Activated naive CD4-positive, alpha-beta T cell treated with anti-CD3 and anti-CD28 coated beads for 36 hours (primary cell): ENCODE measurements at regions of chr2 and their contacts with region 1.

Region 1: DNA sequence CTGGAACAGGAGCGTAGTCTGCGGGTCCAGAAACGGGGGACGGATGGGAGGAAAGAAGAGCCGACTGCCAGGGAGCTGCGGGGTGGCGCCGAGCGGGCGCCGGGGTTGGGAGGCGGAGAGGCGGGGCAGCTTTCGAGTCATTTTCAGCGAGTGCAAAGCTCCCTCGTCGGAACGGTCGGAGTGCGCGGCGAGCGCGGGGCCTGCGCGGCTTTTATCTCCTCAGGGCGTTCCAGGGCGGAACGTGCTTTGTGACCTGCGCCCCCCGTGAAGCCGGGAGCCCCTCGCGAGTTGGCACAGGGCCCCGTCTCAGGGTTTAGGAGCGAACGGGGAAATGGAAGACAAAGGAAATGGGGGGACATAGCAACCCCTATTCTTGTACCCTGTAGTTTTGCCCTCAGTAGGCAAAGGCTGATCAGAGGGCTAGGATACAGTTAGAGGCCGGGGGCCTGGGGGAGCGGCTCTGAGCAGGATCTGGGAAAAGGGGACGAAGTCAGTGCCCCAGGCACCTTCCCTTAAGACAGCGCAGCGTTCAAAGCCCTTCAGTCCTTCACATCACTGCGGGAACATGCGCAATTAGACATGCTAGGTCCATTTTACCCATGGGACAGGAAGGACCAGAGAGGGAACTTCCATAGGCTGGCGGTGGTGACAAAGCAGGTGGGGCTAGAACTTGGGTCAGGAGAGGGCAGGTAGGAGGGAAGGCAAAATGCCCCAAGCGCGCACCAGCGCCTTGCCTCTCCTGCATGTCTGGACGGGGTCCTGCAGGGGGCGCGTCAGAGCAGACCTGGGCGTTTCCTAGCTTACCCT is 60.1 kb upstream of the IL1RL1 start:
- DNase-seq: peak; percentile 82
- H3K4me3 Mint-ChIP-seq: peak overlapping the region; percentile 77
- H3K27ac Mint-ChIP-seq: peak overlapping the region; percentile 69
- H3K4me1 Mint-ChIP-seq: peaks cover 37% of the 10 kb centered on the region
- H3K27me3 Mint-ChIP-seq: peaks cover 3% of the 10 kb centered on the region

Region 2: DNA sequence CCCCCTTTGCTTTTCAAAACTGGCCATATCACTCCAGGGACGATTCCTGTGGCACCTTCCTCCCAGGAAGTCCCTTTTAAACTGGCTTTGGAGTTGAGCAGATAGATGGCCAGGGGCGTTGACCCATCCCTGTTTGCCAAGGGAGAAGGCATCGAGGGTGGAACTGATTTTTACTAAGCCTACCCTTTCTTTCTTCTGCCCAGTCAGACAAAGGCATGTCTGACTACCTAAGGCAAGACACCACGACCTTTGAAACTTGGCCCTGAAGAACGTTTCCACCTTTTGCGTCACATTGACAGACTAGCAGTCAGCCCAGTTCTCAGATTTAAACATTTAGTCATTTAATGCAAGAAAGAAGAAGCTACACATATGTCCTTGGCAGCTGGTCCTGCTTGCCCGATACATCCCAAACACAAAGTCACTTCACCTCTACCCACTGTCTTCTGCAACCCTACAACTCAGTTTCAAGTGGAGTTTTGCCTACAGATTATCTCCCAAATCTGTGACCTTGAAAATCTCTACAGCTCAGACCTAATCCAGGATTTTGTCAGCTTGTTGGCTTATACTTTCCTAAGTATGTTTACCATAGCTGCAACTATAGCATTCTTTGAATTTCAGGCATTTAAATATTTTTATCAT is 361.7 kb before region 1 on chr2:
- CTCF ChIA-PET with region 1: no interaction called
- intact Hi-C with region 1: no loop called
- DNase-seq: no peak
- H3K4me3 Mint-ChIP-seq: no peak overlapping the region
- H3K27ac Mint-ChIP-seq: no peak overlapping the region
- H3K4me1 Mint-ChIP-seq: peaks cover 17% of the 10 kb centered on the region
- H3K27me3 Mint-ChIP-seq: no peaks in the 10 kb centered on the region

Region 3: GRCh38 chr2:101998896-101999789 is 252.1 kb before region 1 on chr2:
- CTCF ChIA-PET with region 1: no interaction called
- intact Hi-C with region 1: no loop called
- DNase-seq: peak; percentile 73
- H3K4me3 Mint-ChIP-seq: peak overlapping the region; percentile 42
- H3K27ac Mint-ChIP-seq: peak overlapping the region; percentile 90
- H3K4me1 Mint-ChIP-seq: peaks cover 38% of the 10 kb centered on the region
- H3K27me3 Mint-ChIP-seq: no peaks in the 10 kb centered on the region

Region 4: DNA sequence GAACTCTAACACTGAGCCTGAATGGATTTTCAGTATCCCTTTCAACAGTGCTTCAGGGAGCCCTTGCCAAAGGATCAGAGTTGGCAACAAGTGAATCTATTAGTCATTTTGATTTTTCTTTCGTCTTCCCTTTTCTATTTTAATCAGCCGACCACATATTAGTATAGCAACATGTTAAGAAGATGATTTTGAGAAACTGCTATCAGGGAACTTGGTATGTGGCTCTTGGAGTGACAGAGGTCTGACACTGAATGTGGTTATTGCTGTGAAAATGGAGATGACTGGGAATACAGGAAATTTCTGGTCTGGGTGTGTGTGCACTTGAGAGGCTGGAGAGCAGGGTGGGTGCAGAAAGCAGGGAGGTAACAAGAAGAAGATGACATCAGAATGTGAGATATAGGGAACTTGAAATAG is 31.4 kb after region 1 on chr2:
- CTCF ChIA-PET with region 1: interaction called, 5 read pairs
- intact Hi-C with region 1: loop called (anchors 2 kb)
- DNase-seq: no peak
- H3K4me3 Mint-ChIP-seq: no peak overlapping the region
- H3K27ac Mint-ChIP-seq: no peak overlapping the region
- H3K4me1 Mint-ChIP-seq: no peaks in the 10 kb centered on the region
- H3K27me3 Mint-ChIP-seq: no peaks in the 10 kb centered on the region

Region 5: DNA sequence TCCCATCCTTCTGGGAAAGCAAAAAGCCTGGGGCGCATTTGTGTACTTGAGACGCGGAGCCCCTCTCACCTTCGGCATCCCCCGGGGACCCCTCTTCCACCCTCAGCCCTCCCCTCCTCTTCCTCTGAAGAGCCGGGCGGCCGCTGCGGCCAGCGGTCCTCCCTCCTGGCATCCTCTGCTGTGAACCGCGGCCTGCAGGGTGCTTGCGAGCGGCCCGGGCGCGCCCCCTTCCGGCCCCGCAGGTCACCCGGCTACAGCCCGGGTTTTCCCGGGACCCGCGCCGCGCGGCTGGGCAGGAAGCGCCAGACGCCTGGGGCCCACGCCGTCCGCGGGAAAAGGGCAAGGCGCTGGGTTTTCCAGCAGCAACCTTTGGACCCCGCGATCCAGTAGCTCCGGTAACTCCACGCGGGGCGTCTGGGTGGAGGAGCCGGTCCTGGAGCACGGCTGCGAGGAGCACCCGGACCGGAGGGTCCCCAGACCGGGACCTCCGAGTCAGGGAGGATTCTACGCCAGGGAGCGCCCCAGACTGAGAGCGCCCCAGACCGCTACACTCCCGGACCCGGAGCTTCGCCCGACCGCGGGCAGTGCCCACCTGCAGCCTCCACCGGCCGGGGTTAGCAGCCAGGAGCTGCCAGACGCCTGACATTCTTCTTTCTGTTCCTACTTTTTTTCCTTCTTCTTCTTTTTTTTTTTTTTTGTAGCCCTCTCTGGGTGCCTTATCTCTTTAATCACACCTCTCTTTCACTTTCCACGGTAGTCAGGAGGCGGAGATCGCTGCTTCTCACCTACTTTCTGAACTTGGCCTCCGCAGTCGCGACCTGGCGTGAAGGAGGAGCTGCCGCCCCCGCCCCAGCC is 104.5 kb after region 1 on chr2 and contains the start of gene IL18R1:
- CTCF ChIA-PET with region 1: interaction called, 8 read pairs
- intact Hi-C with region 1: loop called (anchors 1 kb)
- DNase-seq: peak; percentile 74
- H3K4me3 Mint-ChIP-seq: peak within 1 kb of the TSS; percentile 99
- H3K27ac Mint-ChIP-seq: peak within 1 kb of the TSS; percentile 96
- H3K4me1 Mint-ChIP-seq: peaks cover 45% of the 10 kb centered on the region
- H3K27me3 Mint-ChIP-seq: no peaks in the 10 kb centered on the region
- total RNA-seq, gene IL18R1: 17.1 to 18.4 TPM

Region 6: GRCh38 chr2:102424754-102425153 is 173.5 kb after region 1 on chr2:
- CTCF ChIA-PET with region 1: interaction called, 4 read pairs
- intact Hi-C with region 1: loop called (anchors 1 kb)
- DNase-seq: no peak
- H3K4me3 Mint-ChIP-seq: no peak overlapping the region
- H3K27ac Mint-ChIP-seq: peak overlapping the region; percentile 4
- H3K4me1 Mint-ChIP-seq: peaks cover 78% of the 10 kb centered on the region
- H3K27me3 Mint-ChIP-seq: no peaks in the 10 kb centered on the region